Heart left ventricle (tissue), 16 donors: ENCODE measurements at regions of chr3 and their contacts with region 1.

Region 1: DNA sequence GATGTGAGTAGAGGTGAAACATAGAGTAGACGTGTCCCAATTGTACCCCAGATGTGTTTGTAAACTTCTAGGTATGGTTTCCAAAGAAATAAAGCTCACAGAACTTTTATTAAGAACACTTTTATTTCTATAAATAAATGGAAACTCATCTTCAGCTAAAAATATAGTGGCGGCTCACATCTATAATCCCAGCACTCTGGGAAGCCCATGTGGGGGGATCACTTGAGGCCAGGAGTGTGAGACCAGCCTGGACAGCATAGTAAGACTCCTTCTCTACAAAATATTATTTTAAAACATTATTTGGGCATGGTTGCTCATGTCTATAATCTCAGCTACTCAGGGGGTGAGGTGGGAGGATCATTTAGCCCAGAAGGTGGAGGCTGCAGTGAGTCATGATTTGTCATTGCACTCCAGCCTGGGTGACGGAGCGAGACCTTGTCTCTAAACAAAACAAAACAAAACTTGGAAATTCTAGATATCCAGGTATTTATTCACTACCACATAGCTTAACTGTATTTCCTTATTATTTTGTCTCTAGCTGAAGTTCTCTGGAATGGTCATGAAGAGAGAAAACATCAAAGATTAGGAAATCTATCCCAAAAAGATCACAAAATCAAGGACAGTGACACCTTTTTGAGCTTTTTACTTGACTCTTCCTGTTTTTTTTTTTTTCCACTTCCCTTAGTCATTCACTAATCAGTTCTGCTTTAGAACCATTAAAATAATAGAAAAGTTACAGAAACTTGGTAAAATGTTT is 258.1 kb downstream of the TIGIT start:
- DNase-seq: peak in 2 of 5 donors; percentile 39 to 40
- ATAC-seq: peak in 1 of 4 donors; percentile 64
- H3K4me3 ChIP-seq: no peak overlapping the region
- H3K27ac ChIP-seq: no peak overlapping the region
- H3K4me1 ChIP-seq: peaks cover 0 to 34% (median 10%) of the 10 kb centered on the region in 12 donors
- H3K27me3 ChIP-seq: no peaks in the 10 kb centered on the region
- CTCF ChIP-seq: no peak
- POLR2A ChIP-seq: no peak

Region 2: GRCh38 chr3:114527036-114527644 is 24.8 kb before region 1 on chr3:
- intact Hi-C with region 1: loop called in 2 of 10 experiments (anchors 2 kb)
- DNase-seq: no peak
- ATAC-seq: peak in 2 of 4 donors; percentile 20 to 27
- H3K4me3 ChIP-seq: no peak overlapping the region
- H3K27ac ChIP-seq: no peak overlapping the region
- H3K4me1 ChIP-seq: peaks cover 0 to 19% (median 1%) of the 10 kb centered on the region in 12 donors
- H3K27me3 ChIP-seq: no peaks in the 10 kb centered on the region
- CTCF ChIP-seq: peak; percentile 19 to 59 (median 44)
- POLR2A ChIP-seq: no peak